Calu3 (cell line): ENCODE measurements at regions of chr13 and their contacts with region 1.

Region 1: GRCh38 chr13:97124916-97125809 is 97.0 kb upstream of the MBNL2 start:
- DNase-seq: peak; percentile 39
- H3K4me3 Mint-ChIP-seq: no peak overlapping the region
- H3K27ac Mint-ChIP-seq: peak overlapping the region; percentile 52
- H3K4me1 Mint-ChIP-seq: peaks cover 39% of the 10 kb centered on the region
- H3K27me3 Mint-ChIP-seq: no peaks in the 10 kb centered on the region
- CTCF ChIP-seq: no peak

Region 2: DNA sequence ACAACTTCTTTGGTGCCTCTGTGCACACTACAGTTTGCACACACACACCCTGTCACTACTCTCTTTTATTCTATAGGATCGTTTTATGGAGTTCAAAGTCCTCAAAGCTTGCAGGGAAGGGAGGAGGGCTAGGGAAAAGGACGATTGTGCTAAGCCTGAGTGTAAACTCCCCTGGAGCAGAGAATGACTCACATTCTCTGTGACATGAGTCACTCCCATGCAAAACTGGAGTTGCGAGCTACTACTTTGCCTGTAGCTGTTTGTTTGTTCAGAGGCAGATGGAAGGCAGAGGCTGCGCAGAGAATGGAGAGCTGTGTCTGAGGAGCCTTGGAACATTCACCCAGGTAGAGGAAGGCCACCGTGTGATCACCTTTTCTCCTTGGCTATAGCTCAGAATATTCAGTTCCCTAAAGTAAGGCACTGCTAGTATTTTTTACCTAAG is 16.4 kb after region 1 on chr13:
- CTCF ChIA-PET with region 1: interaction called, 15 read pairs
- intact Hi-C with region 1: no loop called
- DNase-seq: peak; percentile 56
- H3K4me3 Mint-ChIP-seq: peak overlapping the region; percentile 75
- H3K27ac Mint-ChIP-seq: peak overlapping the region; percentile 96
- H3K4me1 Mint-ChIP-seq: peaks cover 34% of the 10 kb centered on the region
- H3K27me3 Mint-ChIP-seq: no peaks in the 10 kb centered on the region
- CTCF ChIP-seq: no peak